IMR-90 (cell line): ENCODE measurements at regions of chr2 and their contacts with region 1.

Region 1: DNA sequence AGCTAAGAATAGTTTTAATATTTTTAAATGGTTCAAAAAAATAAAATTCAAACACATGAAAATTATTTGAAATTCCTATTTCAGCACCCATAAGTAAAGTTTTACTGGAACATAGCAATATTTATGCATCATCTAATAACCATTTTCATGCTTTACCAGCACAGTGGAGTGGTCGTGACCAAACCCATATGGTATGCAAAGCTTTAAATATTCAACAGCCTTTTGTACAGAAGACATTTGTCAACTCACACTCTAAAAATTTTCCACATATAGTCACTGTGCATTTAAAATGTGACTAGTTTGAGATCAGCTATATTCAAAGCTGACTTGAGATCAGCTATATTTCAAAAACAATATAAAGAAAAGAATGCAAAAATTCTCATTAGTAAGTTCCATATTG is 46.2 kb downstream of the PUM2 start:
- DNase-seq: peak; percentile 86
- ATAC-seq: peak; percentile 80
- H3K4me3 ChIP-seq: no peak overlapping the region
- H3K27ac ChIP-seq: no peak overlapping the region
- H3K4me1 ChIP-seq: peaks cover 11% of the 10 kb centered on the region
- H3K27me3 ChIP-seq: no peaks in the 10 kb centered on the region
- CTCF ChIP-seq: no peak
- POLR2A ChIP-seq: no peak
- RAD21 ChIP-seq: no peak

Region 2: GRCh38 chr2:20106746-20107145 is 197.7 kb before region 1 on chr2:
- CTCF ChIA-PET with region 1: no interaction called
- POLR2A ChIA-PET with region 1: no interaction called
- dilution Hi-C with region 1: no loop called
- in situ Hi-C with region 1: no loop called
- intact Hi-C with region 1: no loop called
- DNase-seq: no peak
- ATAC-seq: peak; percentile 58; the same call in 1 of the 2 replicates
- H3K4me3 ChIP-seq: peak overlapping the region; percentile 31; the same call in 1 of the 2 replicates
- H3K27ac ChIP-seq: no peak overlapping the region; the same call in 1 of the 2 replicates
- H3K4me1 ChIP-seq: peaks cover 4% of the 10 kb centered on the region
- H3K27me3 ChIP-seq: no peaks in the 10 kb centered on the region
- CTCF ChIP-seq: peak; percentile 45
- POLR2A ChIP-seq: no peak
- RAD21 ChIP-seq: peak; percentile 42

Region 3: GRCh38 chr2:20291106-20291564 is 13.3 kb before region 1 on chr2:
- CTCF ChIA-PET with region 1: interaction called, 16 read pairs
- POLR2A ChIA-PET with region 1: no interaction called
- dilution Hi-C with region 1: no loop called
- in situ Hi-C with region 1: no loop called
- intact Hi-C with region 1: no loop called
- DNase-seq: peak; percentile 82
- ATAC-seq: peak; percentile 99
- H3K4me3 ChIP-seq: no peak overlapping the region
- H3K27ac ChIP-seq: no peak overlapping the region
- H3K4me1 ChIP-seq: peaks cover 2% of the 10 kb centered on the region; the same call in 1 of the 2 replicates
- H3K27me3 ChIP-seq: no peaks in the 10 kb centered on the region
- CTCF ChIP-seq: peak; percentile 84
- POLR2A ChIP-seq: no peak
- RAD21 ChIP-seq: peak; percentile 56

Region 4: GRCh38 chr2:20343128-20343527 is 38.7 kb after region 1 on chr2:
- CTCF ChIA-PET with region 1: no interaction called
- POLR2A ChIA-PET with region 1: no interaction called
- dilution Hi-C with region 1: no loop called
- in situ Hi-C with region 1: no loop called
- intact Hi-C with region 1: loop called (anchors 5 kb)
- DNase-seq: peak; percentile 42
- ATAC-seq: peak; percentile 60; the same call in 1 of the 2 replicates
- H3K4me3 ChIP-seq: no peak overlapping the region
- H3K27ac ChIP-seq: no peak overlapping the region
- H3K4me1 ChIP-seq: peaks cover 5% of the 10 kb centered on the region
- H3K27me3 ChIP-seq: no peaks in the 10 kb centered on the region
- CTCF ChIP-seq: no peak
- POLR2A ChIP-seq: no peak
- RAD21 ChIP-seq: no peak